ENCODE measurements at regions of chr17 and their contacts with region 1.

Region 1: DNA sequence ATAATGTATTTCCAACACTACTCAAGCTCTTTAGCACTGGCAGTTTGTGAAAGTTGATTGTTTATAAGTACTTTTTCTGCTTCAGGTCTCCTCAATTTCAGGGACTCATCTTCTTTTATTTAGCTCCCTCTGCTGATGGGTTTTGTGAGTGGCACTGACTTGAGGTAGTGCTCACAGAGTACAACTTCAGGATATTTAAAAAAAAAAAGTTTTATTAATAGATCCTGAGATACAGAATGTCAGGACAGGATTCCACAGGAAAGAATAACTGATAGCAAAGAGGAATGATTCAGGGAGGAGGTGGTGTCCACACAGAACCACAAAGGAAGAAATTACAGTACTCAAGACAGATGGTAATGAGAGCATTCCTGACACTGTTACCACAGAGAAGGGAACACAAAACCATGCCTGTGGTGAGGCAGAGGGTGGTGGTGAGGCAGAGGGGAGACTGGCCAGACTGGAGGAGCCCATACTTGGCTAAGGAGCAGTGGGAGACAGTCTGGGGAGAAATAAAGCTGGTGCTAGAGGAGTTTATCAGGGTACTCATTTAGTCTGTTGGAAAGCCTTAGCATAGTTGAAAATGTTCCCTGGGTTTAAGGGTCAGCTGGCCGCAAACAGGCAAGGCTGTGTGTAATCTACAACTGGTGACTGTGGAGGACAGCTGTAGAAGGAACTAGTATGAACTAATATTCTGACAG is 63.7 kb downstream of the SPAG9 start:
- DNase-seq: no peak
- H3K4me3 ChIP-seq: no peak overlapping the region
- H3K27ac ChIP-seq: peak overlapping the region; percentile 63 to 79 (median 68)
- H3K4me1 ChIP-seq: peaks cover 18 to 47% (median 38%) of the 10 kb centered on the region in 4 donors
- H3K27me3 ChIP-seq: no peaks in the 10 kb centered on the region
- CTCF ChIP-seq: peak; percentile 61
- EP300 ChIP-seq: no peak
- POLR2A ChIP-seq: no peak

Region 2: GRCh38 chr17:50935201-50935995 is 121.6 kb before region 1 on chr17:
- intact Hi-C with region 1: no loop called
- DNase-seq: no peak
- H3K4me3 ChIP-seq: no peak overlapping the region
- H3K27ac ChIP-seq: peak overlapping the region; percentile 57 to 98 (median 66)
- H3K4me1 ChIP-seq: peaks cover 24 to 47% (median 26%) of the 10 kb centered on the region in 4 donors
- H3K27me3 ChIP-seq: no peaks in the 10 kb centered on the region
- CTCF ChIP-seq: no peak
- EP300 ChIP-seq: no peak
- POLR2A ChIP-seq: no peak

Region 3: GRCh38 chr17:51006601-51007000 is 50.4 kb before region 1 on chr17:
- intact Hi-C with region 1: loop called (anchors 5 kb)
- DNase-seq: no peak
- H3K4me3 ChIP-seq: no peak overlapping the region
- H3K27ac ChIP-seq: no peak overlapping the region
- H3K4me1 ChIP-seq: no peaks in the 10 kb centered on the region
- H3K27me3 ChIP-seq: no peaks in the 10 kb centered on the region
- CTCF ChIP-seq: no peak
- EP300 ChIP-seq: no peak
- POLR2A ChIP-seq: no peak

Measured in esophagus muscularis mucosa (tissue), 4 donors.